Left lung (tissue), 14 donors: ENCODE measurements at regions of chr13 and their contacts with region 1.

Region 1: DNA sequence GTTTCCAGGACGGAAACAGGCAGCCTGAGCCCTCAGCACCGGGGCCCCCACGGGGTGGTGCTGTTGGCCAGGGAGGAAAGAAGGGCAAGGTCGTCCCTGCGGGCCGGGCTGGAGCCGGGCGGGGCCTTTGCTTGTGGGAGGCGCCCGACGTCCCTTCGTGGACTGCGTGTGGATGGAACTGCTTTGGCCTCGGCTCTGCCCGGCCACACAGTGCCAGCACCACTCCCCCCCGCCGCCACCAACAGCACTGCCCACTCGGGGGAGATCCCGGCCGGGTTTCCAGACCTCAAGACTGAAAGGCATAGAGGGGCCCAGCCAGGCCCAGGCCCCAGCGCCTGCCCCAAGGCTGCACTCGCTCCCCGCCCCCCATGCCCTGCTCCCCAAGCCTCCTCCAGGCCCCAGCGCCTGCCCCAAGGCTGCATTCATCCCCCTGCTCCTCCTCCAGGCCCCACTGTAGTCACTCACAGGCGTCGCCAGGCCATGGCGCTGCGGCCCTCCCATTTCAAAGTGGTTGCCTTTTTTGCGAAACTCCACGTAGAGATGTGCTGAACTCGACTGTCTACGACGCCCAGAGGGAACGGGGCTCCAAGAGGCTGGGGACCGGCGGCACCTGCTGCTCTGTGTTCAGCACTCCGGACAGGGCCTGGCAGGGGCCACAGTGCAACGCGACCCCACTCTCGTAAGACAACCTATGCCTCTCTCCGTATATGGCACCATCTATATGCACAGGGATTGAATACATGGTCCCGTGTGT is 22.5 kb downstream of the C13orf46 start:
- DNase-seq: peak in 3 of 4 donors; percentile 66 to 95 (median 83)
- ATAC-seq: peak; percentile 97
- H3K4me3 ChIP-seq: no peak overlapping the region
- H3K27ac ChIP-seq: no peak overlapping the region
- H3K4me1 ChIP-seq: peaks cover 0 to 8% of the 10 kb centered on the region in 2 donors
- H3K27me3 ChIP-seq: no peaks in the 10 kb centered on the region
- CTCF ChIP-seq: peak; percentile 65 to 84

Region 2: DNA sequence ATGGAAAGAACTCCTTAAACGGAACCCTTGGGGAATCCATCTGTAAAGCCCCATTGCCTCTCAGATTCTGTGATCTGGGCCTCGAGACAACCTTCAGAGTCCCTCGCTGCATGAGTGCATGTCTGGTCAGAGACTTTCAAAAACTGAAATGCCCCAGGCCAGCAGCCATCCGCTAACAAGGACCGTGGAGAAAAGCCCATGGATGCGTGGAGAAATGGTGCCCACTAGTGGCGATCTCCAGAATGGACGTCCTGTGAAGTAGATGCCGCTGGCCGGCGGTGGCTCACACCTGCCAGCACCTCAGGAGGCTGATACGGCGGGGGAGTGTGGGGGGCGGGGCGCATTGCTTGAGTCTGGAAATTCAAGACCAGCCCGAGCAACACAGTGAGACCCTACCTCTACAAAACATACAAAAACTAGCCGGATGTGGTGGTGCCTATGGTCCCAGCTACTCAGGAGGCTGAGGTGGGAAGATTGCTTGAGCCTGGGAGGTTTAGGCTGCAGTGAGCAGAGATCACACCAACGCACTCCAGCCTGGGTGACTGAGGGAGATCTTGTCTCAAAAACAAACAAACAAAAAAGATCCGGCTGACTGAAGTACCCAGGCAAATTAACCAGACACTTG is 275.4 kb after region 1 on chr13:
- intact Hi-C with region 1: loop called in 1 of 2 experiments (anchors 5 kb)
- DNase-seq: peak; percentile 72 to 88 (median 83)
- ATAC-seq: peak; percentile 97
- H3K4me3 ChIP-seq: no peak overlapping the region
- H3K27ac ChIP-seq: no peak overlapping the region
- H3K4me1 ChIP-seq: peaks cover 0 to 12% of the 10 kb centered on the region in 2 donors
- H3K27me3 ChIP-seq: peaks cover 3 to 35% of the 10 kb centered on the region in 2 donors
- CTCF ChIP-seq: peak; percentile 93 to 94